Vagina (tissue), 2 donors: ENCODE measurements at regions of chr21 and their contacts with region 1.

Region 1: DNA sequence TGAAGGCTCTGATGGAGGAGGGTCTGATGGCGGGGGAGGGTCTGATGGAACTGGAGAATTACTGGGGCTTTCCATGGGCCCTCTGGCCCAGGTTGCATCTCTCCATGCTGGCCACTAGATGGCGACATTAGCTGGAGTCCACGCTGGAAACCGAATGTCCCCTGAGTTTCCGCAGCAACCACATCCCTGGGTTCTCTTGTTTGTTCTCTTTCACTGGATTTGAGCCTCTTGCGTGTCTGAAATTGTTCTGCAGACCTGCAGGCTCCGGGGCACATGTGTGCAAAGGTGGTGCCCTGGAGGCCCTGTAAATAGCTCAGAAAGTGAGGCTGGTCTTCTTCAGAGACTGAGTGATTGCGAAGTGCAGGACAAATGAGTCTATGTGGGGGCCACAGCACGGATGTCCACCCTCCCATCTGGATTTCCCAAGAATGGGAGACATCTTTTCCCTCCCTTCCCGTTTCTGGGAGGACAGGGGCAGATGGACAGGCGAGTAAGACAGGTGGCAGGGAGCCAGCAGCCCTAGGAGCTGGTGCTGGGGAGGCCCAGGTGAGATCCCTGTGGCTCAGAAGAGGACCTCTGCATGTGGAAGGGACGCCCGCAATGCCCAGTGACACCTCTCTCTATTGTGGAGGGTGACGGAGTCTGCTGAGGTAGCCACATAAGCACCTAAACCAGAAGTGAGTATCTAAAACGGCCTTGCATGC is 73.2 kb upstream of the ABCG1 start:
- DNase-seq: no peak
- H3K4me3 ChIP-seq: no peak overlapping the region
- H3K27ac ChIP-seq: no peak overlapping the region
- H3K4me1 ChIP-seq: no peaks in the 10 kb centered on the region
- H3K27me3 ChIP-seq: no peaks in the 10 kb centered on the region
- CTCF ChIP-seq: peak; percentile 83 to 87 (median 83)
- POLR2A ChIP-seq: no peak

Region 2: GRCh38 chr21:42097860-42098454 is 47.8 kb before region 1 on chr21:
- intact Hi-C with region 1: no loop called
- DNase-seq: no peak
- H3K4me3 ChIP-seq: no peak overlapping the region
- H3K27ac ChIP-seq: peak overlapping the region; percentile 72
- H3K4me1 ChIP-seq: peaks cover 21% of the 10 kb centered on the region
- H3K27me3 ChIP-seq: no peaks in the 10 kb centered on the region
- CTCF ChIP-seq: no peak
- POLR2A ChIP-seq: no peak

Region 3: DNA sequence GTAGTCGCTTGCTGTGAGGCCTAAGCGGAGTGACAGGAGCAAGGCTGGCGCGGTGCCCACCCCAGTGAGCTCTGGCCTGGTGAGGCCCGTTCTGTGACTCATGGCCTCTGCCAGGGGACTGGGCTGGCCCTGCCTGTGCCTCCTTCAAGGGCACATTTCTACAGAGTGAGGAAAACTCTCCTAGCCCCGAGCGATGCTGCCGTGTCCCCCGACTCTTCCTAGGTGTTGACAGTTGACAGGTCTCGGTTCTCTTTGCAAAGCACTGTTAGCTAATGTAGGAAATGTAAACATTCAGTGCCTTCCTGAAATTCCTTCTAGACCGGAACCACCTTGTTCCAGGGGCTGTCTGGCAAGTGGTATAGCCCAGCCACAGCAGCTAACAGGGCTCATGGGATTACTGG is 117.1 kb after region 1 on chr21:
- intact Hi-C with region 1: loop called (anchors 10 kb)
- DNase-seq: no peak
- H3K4me3 ChIP-seq: no peak overlapping the region
- H3K27ac ChIP-seq: peak overlapping the region; percentile 20
- H3K4me1 ChIP-seq: peaks cover 12% of the 10 kb centered on the region
- H3K27me3 ChIP-seq: no peaks in the 10 kb centered on the region
- CTCF ChIP-seq: no peak
- POLR2A ChIP-seq: no peak